Dorsolateral prefrontal cortex (tissue), 120 donors: ENCODE measurements at regions of chr10 and their contacts with region 1.

Region 1: DNA sequence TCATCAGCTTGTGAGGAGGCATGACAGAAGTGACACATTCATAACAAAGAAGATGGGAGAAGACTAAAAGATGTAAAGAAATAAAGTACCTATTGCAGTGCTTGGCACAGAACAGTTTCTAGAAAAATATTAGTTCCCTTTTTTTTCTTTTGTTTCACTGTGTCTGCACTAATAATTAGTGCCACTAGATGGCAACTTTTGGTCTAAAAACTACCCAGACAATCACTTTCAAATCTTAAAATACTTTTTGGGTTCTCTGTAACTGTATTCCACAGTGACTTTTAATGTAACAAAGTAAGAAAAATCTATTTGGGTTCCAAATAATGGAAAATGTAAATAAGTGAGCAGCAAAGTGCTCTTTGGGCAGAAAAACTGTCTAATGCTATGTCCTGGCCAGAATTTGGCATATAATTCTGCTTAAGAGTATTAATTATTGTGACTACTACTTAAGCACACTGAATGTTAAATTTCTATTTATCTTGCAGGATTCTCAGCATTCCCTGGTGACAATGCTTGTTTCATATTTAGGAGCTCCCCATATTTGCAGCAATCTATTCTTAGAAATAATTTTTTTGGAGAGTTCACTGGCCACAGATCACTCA is 134.8 kb upstream of the KIF5B start:
- DNase-seq: no peak
- H3K4me3 ChIP-seq: peak overlapping the region in 2 of 59 donors; percentile 5 to 7
- H3K27ac ChIP-seq: peak overlapping the region in 4 of 59 donors; percentile 7 to 34 (median 19)
- H3K27me3 ChIP-seq: no peaks in the 10 kb centered on the region
- CTCF ChIP-seq: peak; percentile 63 to 94 (median 82)

Region 2: GRCh38 chr10:31864834-31865518 is 326.0 kb before region 1 on chr10:
- intact Hi-C with region 1: loop called in 1 of 2 experiments (anchors 10 kb)
- DNase-seq: no peak
- H3K4me3 ChIP-seq: peak overlapping the region in 24 of 59 donors; percentile 2 to 40 (median 18)
- H3K27ac ChIP-seq: peak overlapping the region in 17 of 59 donors; percentile 9 to 60 (median 18)
- H3K27me3 ChIP-seq: no peaks in the 10 kb centered on the region
- CTCF ChIP-seq: no peak

Region 3: GRCh38 chr10:32055813-32056600 is 135.0 kb before region 1 on chr10 and contains the start of gene KIF5B:
- intact Hi-C with region 1: loop called in 1 of 2 experiments (anchors 2 kb)
- DNase-seq: peak; percentile 66 to 94 (median 84)
- H3K4me3 ChIP-seq: peak within 1 kb of the TSS; percentile 54 to 98 (median 89)
- H3K27ac ChIP-seq: peak within 1 kb of the TSS; percentile 81 to 100 (median 99)
- H3K27me3 ChIP-seq: no peaks in the 10 kb centered on the region
- CTCF ChIP-seq: peak in 26 of 56 donors; percentile 2 to 48 (median 22)
- total RNA-seq, gene KIF5B: 73.4 to 239 (median 109) TPM

Region 4: GRCh38 chr10:32367793-32368453 is 176.9 kb after region 1 on chr10:
- intact Hi-C with region 1: loop called (anchors 2 to 5 kb)
- DNase-seq: peak in 9 of 10 donors; percentile 39 to 69 (median 60)
- H3K4me3 ChIP-seq: peak overlapping the region in 44 of 59 donors; percentile 2 to 52 (median 28)
- H3K27ac ChIP-seq: peak overlapping the region in 42 of 59 donors; percentile 1 to 80 (median 48)
- H3K27me3 ChIP-seq: no peaks in the 10 kb centered on the region
- CTCF ChIP-seq: peak; percentile 78 to 98 (median 88)

Region 5: DNA sequence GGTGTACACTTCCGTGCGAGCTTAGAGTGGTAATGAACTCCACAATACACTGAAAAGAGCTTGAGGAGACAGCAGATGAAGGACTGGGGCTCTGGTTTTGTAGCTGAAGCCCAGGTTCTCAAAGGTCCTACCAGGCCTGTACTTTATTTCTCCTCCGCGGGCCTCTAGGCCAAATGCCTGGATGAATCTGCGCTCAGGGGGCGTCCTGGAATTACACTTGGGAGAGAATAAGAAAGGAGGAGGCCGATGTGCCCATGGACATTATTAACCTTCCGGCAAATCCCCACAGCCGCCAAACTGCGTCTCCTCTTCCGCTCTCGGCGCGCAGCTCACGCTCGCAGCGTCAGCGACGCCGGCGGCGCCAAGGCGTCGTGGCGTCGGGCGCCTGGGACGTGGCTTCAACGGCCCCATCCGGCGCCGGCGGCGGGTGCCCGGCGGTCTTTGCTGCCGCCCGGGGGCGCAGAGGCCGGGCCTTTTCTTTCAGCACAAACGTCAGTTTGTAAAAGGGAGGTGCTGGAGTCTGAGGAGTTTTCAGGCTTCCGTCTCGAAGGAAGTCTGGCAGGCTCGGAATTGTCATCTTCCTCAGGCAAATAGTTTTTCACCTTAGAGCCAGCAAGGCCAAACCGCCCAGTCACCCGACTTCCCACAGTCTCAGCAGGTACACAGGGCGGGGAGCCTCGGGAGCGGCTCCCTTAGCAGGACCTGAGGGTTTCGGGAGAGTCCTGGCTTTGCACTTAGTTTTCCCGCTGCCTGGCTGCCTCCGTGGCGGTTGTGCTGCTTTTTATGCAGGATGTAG is 254.9 kb after region 1 on chr10 and contains the start of gene CCDC7:
- intact Hi-C with region 1: loop called in 1 of 2 experiments (anchors 10 kb)
- DNase-seq: peak; percentile 52 to 89 (median 74)
- H3K4me3 ChIP-seq: peak within 1 kb of the TSS; percentile 59 to 94 (median 84)
- H3K27ac ChIP-seq: peak within 1 kb of the TSS; percentile 66 to 99 (median 96)
- H3K27me3 ChIP-seq: no peaks in the 10 kb centered on the region
- CTCF ChIP-seq: peak; percentile 13 to 78 (median 59)
- total RNA-seq, gene CCDC7: 53.8 to 143 (median 87.0) TPM

Region 6: DNA sequence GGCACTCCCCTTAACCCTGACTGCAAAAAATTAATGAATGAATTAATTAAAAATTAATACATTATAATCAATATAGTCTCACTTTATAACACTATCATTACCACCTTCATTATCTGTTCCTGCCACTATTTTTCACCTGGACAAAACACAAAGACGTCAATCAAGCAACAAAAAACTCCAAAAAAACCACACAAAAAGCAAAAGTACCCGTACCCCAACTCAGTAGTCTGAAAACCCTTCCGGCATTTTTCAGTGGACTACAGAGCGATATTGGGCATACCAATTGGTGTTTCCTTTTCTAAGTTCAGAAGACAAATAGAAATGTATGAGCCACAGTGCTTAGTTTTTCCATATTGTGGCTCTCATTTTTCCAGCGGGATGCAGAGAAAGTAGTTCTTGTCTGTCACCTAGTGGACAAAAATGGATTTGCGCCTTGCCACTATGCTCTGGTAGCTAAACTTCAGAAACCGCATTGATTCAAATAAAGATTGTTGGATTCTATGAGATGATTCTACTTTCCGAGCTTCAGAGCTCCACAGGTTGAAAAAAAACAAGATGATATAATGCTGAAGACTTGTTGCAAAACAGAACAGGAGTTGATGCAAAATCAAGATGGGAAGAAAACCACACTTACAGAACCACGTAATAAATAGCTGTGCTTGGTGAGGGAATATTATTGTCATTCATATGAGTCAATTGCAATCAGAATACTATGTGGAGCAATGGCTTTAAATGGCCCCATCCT is 817.7 kb after region 1 on chr10:
- intact Hi-C with region 1: loop called in 1 of 2 experiments (anchors 10 kb)
- DNase-seq: peak in 4 of 10 donors; percentile 40 to 71 (median 48)
- H3K4me3 ChIP-seq: peak overlapping the region in 15 of 59 donors; percentile 6 to 53 (median 30)
- H3K27ac ChIP-seq: no peak overlapping the region
- H3K27me3 ChIP-seq: peaks cover 0 to 9% (median 0%) of the 10 kb centered on the region in 45 donors
- CTCF ChIP-seq: peak; percentile 89 to 100 (median 98)